Dendritic cell treated with granulocyte-macrophage colony-stimulating factor and Interleukin-4, amounts not matched to agents 40 ng/mL and 50 ng/mL, for 4 days (primary cell): ENCODE measurements at regions of chr17 and their contacts with region 1.

Region 1: GRCh38 chr17:50129728-50130558 is at the start of gene SAMD14:
- H3K4me3 Mint-ChIP-seq: peak within 1 kb of the TSS; percentile 67
- H3K27ac Mint-ChIP-seq: peak within 1 kb of the TSS; percentile 18
- H3K4me1 Mint-ChIP-seq: peaks cover 49% of the 10 kb centered on the region
- H3K27me3 Mint-ChIP-seq: peaks cover 62% of the 10 kb centered on the region

Region 2: GRCh38 chr17:50161023-50161910 is 31.3 kb after region 1 on chr17:
- intact Hi-C with region 1: loop called (anchors 5 kb)
- H3K4me3 Mint-ChIP-seq: peak overlapping the region; percentile 59
- H3K27ac Mint-ChIP-seq: no peak overlapping the region
- H3K4me1 Mint-ChIP-seq: peaks cover 35% of the 10 kb centered on the region
- H3K27me3 Mint-ChIP-seq: peaks cover 32% of the 10 kb centered on the region